ENCODE measurements at regions of chr4 and their contacts with region 1.

Region 1: GRCh38 chr4:163544407-163545038 is 50.0 kb downstream of the TMA16 start:
- DNase-seq: no peak
- H3K4me3 ChIP-seq: no peak overlapping the region
- CTCF ChIP-seq: peak; percentile 98

Region 2: GRCh38 chr4:161555689-161556660 is 1988.5 kb before region 1 on chr4:
- in situ Hi-C with region 1: loop called (anchors 25 kb)
- DNase-seq: peak; percentile 6
- H3K4me3 ChIP-seq: no peak overlapping the region
- CTCF ChIP-seq: no peak

Measured in astrocyte of the cerebellum (primary cell).